ENCODE measurements at regions of chr4 and their contacts with region 1.

Region 1: GRCh38 chr4:153083447-153083947 is 120.7 kb upstream of the TRIM2 start:
- DNase-seq: peak; percentile 31
- H3K4me3 ChIP-seq: no peak overlapping the region
- H3K27me3 ChIP-seq: peaks cover 1% of the 10 kb centered on the region
- CTCF ChIP-seq: peak; percentile 67

Region 2: DNA sequence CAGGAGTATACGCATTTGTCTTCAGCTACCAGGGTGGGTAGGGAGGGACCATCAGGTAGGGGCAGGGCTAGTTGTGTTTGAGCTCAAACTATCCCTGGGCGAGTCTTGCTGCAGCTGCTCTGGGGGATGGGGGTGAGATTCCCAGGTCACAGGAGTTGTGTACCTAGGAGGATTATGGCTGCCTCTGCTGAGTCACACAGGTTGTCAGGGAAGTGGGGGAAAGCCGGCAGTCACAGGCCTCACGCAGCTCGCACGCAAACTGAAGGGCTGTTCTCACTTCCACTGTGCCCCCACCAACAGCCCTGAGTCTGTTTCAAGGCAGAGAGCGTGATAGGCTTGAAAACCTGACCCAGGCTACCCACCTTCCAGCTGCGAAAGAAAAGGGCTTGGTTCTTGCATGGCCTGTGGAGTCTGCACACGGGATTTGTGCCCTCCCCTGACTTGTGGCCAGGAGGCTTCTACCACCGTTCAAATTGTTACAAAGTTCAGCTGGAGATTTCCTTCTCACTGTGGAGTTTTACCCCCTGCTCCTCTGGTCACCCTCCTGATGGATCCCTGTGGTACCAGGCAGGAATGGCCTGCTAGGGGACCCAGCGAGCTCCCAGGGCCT is 239.9 kb before region 1 on chr4:
- CTCF ChIA-PET with region 1: interaction called, 72 read pairs
- POLR2A ChIA-PET with region 1: no interaction called
- DNase-seq: no peak
- H3K4me3 ChIP-seq: no peak overlapping the region
- H3K27me3 ChIP-seq: no peaks in the 10 kb centered on the region
- CTCF ChIP-seq: no peak

Region 3: DNA sequence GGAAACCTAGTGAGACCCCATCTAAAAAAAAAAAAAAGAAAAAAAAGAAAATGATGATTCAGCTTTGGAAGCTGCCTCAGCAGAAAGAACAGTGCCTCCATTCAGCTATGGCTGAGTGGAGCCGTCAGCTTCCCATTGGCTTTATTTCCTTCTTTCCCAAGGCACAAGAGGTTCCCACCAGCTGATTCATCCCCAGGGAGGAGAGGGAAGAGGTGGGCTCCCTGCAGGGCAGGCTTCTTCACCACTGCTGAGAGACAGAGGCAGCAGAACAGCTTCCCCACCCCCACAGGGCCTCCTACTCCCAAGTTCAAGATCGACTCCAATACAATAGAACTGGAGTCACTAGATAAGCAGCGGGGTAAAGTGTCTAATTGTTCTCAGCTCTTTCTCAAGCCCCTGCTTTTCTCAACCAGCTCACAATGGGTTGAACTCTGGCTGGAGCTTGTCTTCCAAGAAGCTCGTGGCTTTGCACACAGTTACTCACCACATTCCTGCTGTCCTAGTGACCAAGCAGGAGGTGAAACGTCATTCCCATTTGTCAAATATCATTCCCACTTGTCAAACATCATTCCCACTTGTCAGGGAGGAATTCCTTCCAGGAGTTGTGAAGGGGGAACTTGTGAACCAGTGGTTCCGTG is 99.6 kb before region 1 on chr4:
- CTCF ChIA-PET with region 1: no interaction called
- POLR2A ChIA-PET with region 1: no interaction called
- DNase-seq: no peak
- H3K4me3 ChIP-seq: no peak overlapping the region
- H3K27me3 ChIP-seq: peaks cover 3% of the 10 kb centered on the region
- CTCF ChIP-seq: no peak

Region 4: DNA sequence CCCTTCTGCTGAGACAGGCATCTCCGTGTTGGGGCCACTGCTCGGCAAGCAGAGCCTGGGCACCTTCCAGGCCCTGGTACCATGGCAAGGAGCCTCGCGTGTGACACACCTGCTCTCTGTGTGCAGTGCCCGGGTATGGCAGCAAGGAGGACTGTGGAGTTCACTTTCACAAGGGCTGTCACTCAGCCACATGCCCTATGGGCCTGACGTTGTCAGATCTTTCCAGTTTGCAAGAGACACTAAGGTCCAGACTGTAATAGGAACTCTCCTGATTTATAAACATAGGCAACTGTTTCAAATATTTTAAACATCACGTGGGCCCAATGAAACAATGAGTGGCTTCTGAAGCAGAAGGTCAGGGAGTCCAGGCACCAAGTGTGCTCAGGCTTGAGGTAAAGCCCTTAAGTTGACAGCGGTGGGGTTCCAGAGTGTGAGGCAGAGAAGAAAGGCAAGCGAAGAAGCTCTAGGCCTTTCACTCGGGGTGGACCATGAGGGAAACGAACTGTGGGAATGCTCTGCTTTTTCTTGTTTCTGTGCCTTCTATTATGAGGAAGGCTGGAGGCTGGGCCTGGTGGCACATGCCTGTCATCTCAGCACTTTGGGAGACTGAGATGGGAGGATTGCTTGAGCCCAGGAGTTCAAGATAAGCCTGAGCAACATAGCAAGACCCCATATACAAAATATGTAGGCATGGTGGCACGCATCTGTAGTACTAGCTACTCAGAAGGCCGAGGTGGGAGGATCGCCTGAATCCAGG is 12.1 kb after region 1 on chr4:
- CTCF ChIA-PET with region 1: interaction called, 35 read pairs
- POLR2A ChIA-PET with region 1: no interaction called
- DNase-seq: no peak
- H3K4me3 ChIP-seq: no peak overlapping the region
- H3K27me3 ChIP-seq: no peaks in the 10 kb centered on the region; the same call in 1 of the 2 replicates
- CTCF ChIP-seq: no peak

Region 5: GRCh38 chr4:153115322-153116290 is 32.1 kb after region 1 on chr4:
- CTCF ChIA-PET with region 1: interaction called, 34 read pairs
- POLR2A ChIA-PET with region 1: interaction called, 3 read pairs
- DNase-seq: peak; percentile 62
- H3K4me3 ChIP-seq: peak overlapping the region; percentile 21
- H3K27me3 ChIP-seq: no peaks in the 10 kb centered on the region; the same call in 1 of the 2 replicates
- CTCF ChIP-seq: no peak

Region 6: GRCh38 chr4:153127760-153128494 is 44.4 kb after region 1 on chr4:
- CTCF ChIA-PET with region 1: interaction called, 189 read pairs
- POLR2A ChIA-PET with region 1: interaction called, 3 read pairs
- DNase-seq: no peak
- H3K4me3 ChIP-seq: no peak overlapping the region; the same call in 1 of the 2 replicates
- H3K27me3 ChIP-seq: peaks cover 1% of the 10 kb centered on the region; the same call in 1 of the 2 replicates
- CTCF ChIP-seq: peak; percentile 79